ENCODE measurements at regions of chrX and their contacts with region 1.

Region 1: GRCh38 chrX:73855546-73855945 is 292.5 kb downstream of the CHIC1 start:
- DNase-seq: peak; percentile 78
- H3K4me3 ChIP-seq: no peak overlapping the region
- H3K27ac ChIP-seq: no peak overlapping the region
- H3K4me1 ChIP-seq: no peaks in the 10 kb centered on the region
- H3K27me3 ChIP-seq: no peaks in the 10 kb centered on the region
- CTCF ChIP-seq: peak; percentile 70

Region 2: DNA sequence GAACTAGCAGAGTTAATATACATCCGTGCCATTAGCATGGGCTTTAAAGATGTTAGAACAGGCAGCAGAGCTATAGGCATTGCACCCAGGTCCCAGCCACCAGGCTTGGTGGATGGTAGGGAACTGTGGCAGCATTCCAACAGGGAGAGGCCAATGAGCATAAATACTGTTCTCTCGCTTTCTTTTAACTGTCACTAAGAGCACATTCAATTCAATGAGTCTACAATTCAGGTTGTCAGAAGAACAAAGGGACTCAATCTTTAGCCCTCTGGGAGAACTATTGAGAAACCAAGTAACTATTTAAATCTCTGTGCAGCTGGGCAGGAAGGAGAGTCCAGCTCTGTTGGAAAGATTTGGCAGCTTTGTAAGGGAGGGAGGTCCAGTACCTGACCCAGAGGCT is 126.9 kb before region 1 on chrX:
- intact Hi-C with region 1: no loop called
- DNase-seq: no peak
- H3K4me3 ChIP-seq: no peak overlapping the region
- H3K27ac ChIP-seq: no peak overlapping the region
- H3K4me1 ChIP-seq: no peaks in the 10 kb centered on the region
- H3K27me3 ChIP-seq: no peaks in the 10 kb centered on the region
- CTCF ChIP-seq: no peak

Region 3: DNA sequence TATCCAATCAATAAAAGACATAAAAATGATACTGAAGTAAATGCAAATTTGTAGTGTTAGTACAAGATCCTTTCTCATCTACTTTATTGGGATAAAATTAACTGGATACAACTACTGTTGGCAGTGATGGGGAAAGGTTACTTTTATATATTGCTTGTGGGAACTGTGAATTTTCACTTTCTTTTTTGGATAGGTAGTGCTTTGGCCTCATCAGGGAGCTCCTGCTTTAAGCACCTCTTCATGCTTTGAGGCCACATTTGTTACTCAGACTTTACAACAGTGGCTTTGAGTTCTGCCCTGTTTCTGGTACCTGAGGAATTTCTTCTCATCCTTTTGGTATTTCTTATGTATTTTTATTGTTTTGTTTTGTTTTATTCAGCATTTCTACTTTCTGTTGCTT is 131.6 kb after region 1 on chrX:
- intact Hi-C with region 1: no loop called
- DNase-seq: no peak
- H3K4me3 ChIP-seq: no peak overlapping the region
- H3K27ac ChIP-seq: no peak overlapping the region
- H3K4me1 ChIP-seq: no peaks in the 10 kb centered on the region
- H3K27me3 ChIP-seq: no peaks in the 10 kb centered on the region
- CTCF ChIP-seq: no peak

Region 4: GRCh38 chrX:74015379-74016019 is 160.0 kb after region 1 on chrX:
- intact Hi-C with region 1: loop called (anchors 2 kb)
- DNase-seq: peak; percentile 74
- H3K4me3 ChIP-seq: no peak overlapping the region
- H3K27ac ChIP-seq: no peak overlapping the region
- H3K4me1 ChIP-seq: no peaks in the 10 kb centered on the region
- H3K27me3 ChIP-seq: no peaks in the 10 kb centered on the region
- CTCF ChIP-seq: peak; percentile 80

Region 5: DNA sequence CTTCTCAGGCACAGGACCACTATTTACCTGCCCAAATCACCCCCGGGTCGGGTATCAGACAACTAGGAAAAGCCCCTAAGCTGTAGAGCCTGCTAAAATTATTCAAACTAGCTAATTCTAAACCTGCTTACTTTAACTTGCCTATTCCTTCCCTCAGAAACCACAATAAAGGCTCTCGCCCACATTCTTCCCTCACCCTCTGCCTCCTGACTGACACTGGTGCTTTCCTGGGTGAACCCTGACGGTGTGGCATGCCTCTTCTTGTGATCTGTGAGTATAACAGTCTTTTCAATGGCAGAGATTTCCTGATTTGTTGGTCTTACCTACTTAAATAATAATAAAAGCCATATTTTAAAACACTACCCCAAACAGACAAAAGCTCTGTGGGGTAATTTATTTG is 206.3 kb after region 1 on chrX:
- intact Hi-C with region 1: no loop called
- DNase-seq: no peak
- H3K4me3 ChIP-seq: no peak overlapping the region
- H3K27ac ChIP-seq: no peak overlapping the region
- H3K4me1 ChIP-seq: no peaks in the 10 kb centered on the region
- H3K27me3 ChIP-seq: no peaks in the 10 kb centered on the region
- CTCF ChIP-seq: no peak

Region 6: GRCh38 chrX:74133156-74133796 is 277.7 kb after region 1 on chrX:
- intact Hi-C with region 1: loop called (anchors 2 kb)
- DNase-seq: peak; percentile 27
- H3K4me3 ChIP-seq: no peak overlapping the region
- H3K27ac ChIP-seq: no peak overlapping the region
- H3K4me1 ChIP-seq: no peaks in the 10 kb centered on the region
- H3K27me3 ChIP-seq: no peaks in the 10 kb centered on the region
- CTCF ChIP-seq: peak; percentile 75

Region 7: GRCh38 chrX:74251006-74251930 is 395.7 kb after region 1 on chrX:
- intact Hi-C with region 1: no loop called
- DNase-seq: peak; percentile 61
- H3K4me3 ChIP-seq: no peak overlapping the region
- H3K27ac ChIP-seq: peak overlapping the region; percentile 61
- H3K4me1 ChIP-seq: peaks cover 6% of the 10 kb centered on the region
- H3K27me3 ChIP-seq: no peaks in the 10 kb centered on the region
- CTCF ChIP-seq: no peak

Region 8: DNA sequence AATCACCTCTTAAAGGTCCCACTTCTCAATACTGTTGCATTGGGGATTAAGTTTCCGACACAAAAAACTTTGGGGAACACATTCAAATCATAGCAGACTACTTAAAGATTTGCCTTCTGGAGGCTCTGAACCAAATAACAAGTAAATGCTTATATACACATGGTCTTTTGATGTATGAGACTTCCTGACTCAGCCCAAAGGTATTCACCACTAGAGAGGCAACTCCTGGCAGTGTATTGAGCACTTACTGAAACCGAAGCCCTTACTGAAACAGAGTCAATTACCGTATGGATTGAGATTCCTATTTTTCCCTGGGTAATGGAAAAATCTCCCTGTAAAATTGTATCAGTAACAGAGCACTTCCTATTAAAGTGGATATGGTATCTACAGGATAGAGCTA is 493.8 kb after region 1 on chrX:
- intact Hi-C with region 1: loop called (anchors 5 kb)
- DNase-seq: no peak
- H3K4me3 ChIP-seq: no peak overlapping the region
- H3K27ac ChIP-seq: no peak overlapping the region
- H3K4me1 ChIP-seq: no peaks in the 10 kb centered on the region
- H3K27me3 ChIP-seq: no peaks in the 10 kb centered on the region
- CTCF ChIP-seq: no peak

Region 9: DNA sequence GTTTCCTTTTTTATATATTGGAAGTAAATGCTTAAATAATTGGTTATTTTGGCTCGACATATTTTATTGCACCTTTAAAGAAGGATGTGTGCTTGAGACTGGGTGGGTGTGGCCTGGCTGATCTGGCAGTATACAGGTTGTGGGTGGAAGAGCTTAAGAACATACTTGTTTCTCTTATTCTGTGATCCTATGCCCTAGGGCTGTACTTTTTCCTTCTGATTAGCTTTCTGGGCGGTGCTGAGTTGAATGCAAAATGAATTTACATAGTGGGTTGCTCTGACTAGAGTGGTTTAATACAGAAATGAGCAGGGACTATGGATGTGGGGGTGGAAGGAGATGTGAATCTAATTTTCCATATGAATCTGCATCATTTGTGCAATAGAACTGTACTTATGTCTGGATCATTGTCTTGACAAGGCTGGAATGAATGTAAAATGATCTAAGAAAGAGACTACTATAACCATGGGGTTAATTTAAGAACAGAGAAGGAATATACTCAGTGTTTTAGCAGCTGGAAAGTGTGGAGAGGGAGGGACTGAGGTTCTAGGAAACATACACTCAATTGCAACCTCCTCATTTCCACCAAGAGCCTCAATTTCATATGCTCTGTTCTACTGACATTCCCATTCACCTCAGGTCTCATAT is 685.2 kb after region 1 on chrX:
- intact Hi-C with region 1: loop called (anchors 10 kb)
- DNase-seq: no peak
- H3K4me3 ChIP-seq: no peak overlapping the region
- H3K27ac ChIP-seq: no peak overlapping the region
- H3K4me1 ChIP-seq: no peaks in the 10 kb centered on the region
- H3K27me3 ChIP-seq: no peaks in the 10 kb centered on the region
- CTCF ChIP-seq: no peak

Measured in colonic mucosa (tissue), 4 donors.